Naive thymus-derived CD8-positive, alpha-beta T cell (primary cell): ENCODE measurements at regions of chr11 and their contacts with region 1.

Region 1: DNA sequence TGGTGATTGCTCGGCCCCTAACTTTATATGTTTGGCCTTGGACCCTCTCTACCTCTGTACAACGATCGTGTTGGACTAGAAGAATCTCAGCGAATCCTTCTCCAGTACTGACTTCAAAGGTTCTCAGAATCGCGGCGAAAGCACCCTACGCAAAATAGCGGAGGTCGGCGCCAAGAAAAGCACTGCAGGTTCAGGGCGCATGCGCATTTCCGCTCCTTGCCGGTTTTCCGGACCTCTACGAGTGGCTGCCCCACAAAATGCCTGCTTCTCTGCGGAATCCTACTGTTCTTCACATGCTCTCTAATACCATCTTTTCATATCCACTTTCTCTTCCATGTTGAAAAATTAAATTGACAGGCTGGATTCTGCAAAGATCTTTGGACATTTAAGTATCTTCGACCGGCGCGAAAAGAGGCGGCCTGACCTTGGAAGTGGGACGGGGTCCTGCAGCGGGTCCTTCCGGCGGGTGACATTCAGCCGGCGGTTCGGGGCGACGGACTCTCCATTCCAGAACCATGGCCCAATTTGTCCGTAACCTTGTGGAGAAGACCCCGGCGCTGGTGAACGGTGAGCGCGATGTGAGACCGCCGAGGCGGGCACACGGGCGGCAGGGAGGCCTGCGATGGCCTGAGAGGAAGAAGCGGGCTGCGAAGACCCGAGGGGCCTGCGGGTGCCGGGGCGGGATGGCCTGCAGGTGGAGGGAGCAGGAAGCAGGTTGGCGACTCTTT is at the start of gene ATP5MG:
- DNase-seq: peak; percentile 87 to 98 (median 93)
- ATAC-seq: peak; percentile 56 to 59
- H3K4me3 Mint-ChIP-seq: peak within 1 kb of the TSS; percentile 89 to 99 (median 96)
- H3K27ac Mint-ChIP-seq: peak within 1 kb of the TSS; percentile 99 to 100 (median 100)
- H3K4me1 Mint-ChIP-seq: peaks cover 31 to 74% (median 62%) of the 10 kb centered on the region in 4 donors
- H3K27me3 Mint-ChIP-seq: no peaks in the 10 kb centered on the region
- polyA plus RNA-seq, gene ATP5MG: 649 to 923 (median 790) TPM

Region 2: DNA sequence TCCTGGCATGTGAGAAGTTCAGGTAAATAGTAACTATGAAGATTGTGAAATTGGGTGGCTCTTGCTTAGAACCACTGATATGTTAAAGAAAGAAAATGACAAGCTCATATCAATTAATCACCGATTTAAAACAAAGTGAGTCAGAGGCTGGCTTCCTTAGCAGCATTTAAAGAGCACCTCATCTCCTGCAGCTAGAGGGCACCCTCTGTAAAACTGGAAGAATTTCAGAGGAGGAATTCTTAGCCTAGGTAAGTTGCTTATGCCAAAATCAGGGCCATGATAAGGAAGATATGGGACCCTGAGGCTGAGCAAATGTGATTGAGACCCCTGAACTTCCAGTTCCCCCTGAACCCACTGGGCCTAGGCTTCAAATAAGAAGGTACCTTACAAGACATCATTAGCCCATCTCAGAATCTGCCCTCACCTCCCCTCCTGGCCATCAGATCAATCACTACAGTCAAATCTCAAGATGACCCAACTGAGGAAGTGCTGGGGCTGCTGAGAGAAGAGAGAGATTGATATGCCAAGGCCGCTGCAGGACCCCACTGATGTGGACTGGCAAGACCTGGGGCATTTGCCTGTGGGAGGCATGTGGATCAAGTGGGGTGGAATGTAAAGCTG is 105.4 kb before region 1 on chr11:
- POLR2A ChIA-PET with region 1: interaction called, 11 read pairs
- DNase-seq: peak in 9 of 10 donors; percentile 25 to 76 (median 37)
- ATAC-seq: peak; percentile 80 to 82
- H3K4me3 Mint-ChIP-seq: peak overlapping the region in 3 of 10 donors; percentile 9 to 30 (median 22)
- H3K27ac Mint-ChIP-seq: peak overlapping the region; percentile 63 to 92 (median 84)
- H3K4me1 Mint-ChIP-seq: peaks cover 17 to 41% (median 27%) of the 10 kb centered on the region in 4 donors
- H3K27me3 Mint-ChIP-seq: peaks cover 0 to 1% (median 0%) of the 10 kb centered on the region in 5 donors

Region 3: DNA sequence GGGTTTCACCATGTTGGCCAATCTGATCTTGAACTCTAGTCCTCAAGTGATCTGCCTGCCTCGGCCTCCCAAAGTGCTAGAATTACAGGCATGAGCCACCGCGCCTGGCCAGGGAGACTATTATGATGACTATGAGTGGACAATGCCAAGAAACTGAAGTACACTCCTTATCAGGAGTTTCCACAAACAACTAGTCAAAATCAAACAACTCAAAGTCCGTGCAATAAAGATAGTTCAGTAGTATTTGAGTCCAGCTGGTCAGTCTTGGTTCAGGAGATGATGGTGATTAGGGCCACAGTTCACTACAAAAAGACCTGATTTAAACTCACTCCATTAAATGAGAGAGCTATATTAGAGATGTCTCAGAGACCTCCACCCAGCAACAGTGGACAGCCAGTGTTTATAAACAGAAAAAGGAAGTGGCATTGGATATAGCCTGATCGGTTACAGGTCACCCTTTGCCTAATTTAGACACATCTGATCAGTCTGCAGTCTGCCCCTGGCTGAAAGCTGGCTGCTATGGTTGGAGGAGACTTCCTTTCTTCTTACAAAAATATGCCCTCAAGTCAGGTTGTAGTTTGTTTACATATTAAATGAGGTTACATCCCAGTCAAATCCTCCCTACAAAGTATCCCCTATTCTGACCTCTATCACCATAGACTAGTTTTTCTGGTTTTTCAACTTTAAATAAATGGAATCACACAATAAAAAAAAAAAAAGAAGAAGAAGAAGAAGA is 79.8 kb before region 1 on chr11:
- POLR2A ChIA-PET with region 1: interaction called, 10 read pairs
- DNase-seq: no peak
- ATAC-seq: no peak
- H3K4me3 Mint-ChIP-seq: peak overlapping the region in 9 of 10 donors; percentile 14 to 78 (median 62)
- H3K27ac Mint-ChIP-seq: peak overlapping the region; percentile 54 to 99 (median 86)
- H3K4me1 Mint-ChIP-seq: peaks cover 38 to 83% (median 70%) of the 10 kb centered on the region in 4 donors
- H3K27me3 Mint-ChIP-seq: no peaks in the 10 kb centered on the region

Region 4: DNA sequence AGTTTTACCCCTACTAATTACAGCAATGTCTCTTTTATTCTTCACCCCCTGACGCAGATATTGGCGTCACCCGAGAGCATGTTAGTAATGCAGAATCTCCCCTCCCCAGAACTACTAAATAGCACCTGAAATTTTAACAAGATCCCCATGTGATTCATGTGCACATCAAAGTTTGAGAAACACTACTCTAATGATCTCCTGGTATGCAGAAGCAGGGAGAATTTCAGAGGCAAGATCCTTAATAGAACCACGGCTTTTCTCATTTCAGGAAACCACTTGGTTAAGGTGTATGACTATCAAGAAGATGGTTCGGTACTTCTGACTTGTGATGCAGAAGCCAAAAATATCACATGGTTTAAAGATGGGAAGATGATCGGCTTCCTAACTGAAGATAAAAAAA is 51.8 kb before region 1 on chr11:
- POLR2A ChIA-PET with region 1: no interaction called
- DNase-seq: no peak
- ATAC-seq: peak in 1 of 2 donors; percentile 22
- H3K4me3 Mint-ChIP-seq: peak overlapping the region in 8 of 10 donors; percentile 16 to 96 (median 80)
- H3K27ac Mint-ChIP-seq: peak overlapping the region; percentile 82 to 100 (median 98)
- H3K4me1 Mint-ChIP-seq: peaks cover 44 to 66% (median 58%) of the 10 kb centered on the region in 4 donors
- H3K27me3 Mint-ChIP-seq: no peaks in the 10 kb centered on the region

Region 5: DNA sequence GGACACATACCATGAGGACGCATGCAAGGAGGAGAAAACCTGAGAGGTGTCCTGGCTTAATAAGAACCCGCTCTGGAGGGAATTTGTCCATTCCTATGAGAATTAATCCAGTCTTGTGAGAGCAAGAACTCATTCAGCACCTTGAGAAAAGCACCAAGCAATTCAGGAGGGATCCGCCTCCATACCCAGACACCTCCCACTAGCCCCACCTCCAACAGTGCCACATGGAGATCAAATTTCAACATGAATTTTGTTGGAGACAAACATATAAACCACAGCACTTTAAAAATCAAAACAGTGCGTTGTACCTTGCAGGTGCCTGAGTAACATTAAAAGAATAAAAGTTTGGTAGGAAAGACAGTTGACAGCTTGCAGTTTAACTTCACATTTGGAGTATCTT is 30.5 kb before region 1 on chr11:
- POLR2A ChIA-PET with region 1: no interaction called
- DNase-seq: no peak
- ATAC-seq: no peak
- H3K4me3 Mint-ChIP-seq: no peak overlapping the region
- H3K27ac Mint-ChIP-seq: peak overlapping the region in 2 of 10 donors; percentile 32 to 62
- H3K4me1 Mint-ChIP-seq: peaks cover 0 to 9% (median 2%) of the 10 kb centered on the region in 4 donors
- H3K27me3 Mint-ChIP-seq: no peaks in the 10 kb centered on the region

Region 6: DNA sequence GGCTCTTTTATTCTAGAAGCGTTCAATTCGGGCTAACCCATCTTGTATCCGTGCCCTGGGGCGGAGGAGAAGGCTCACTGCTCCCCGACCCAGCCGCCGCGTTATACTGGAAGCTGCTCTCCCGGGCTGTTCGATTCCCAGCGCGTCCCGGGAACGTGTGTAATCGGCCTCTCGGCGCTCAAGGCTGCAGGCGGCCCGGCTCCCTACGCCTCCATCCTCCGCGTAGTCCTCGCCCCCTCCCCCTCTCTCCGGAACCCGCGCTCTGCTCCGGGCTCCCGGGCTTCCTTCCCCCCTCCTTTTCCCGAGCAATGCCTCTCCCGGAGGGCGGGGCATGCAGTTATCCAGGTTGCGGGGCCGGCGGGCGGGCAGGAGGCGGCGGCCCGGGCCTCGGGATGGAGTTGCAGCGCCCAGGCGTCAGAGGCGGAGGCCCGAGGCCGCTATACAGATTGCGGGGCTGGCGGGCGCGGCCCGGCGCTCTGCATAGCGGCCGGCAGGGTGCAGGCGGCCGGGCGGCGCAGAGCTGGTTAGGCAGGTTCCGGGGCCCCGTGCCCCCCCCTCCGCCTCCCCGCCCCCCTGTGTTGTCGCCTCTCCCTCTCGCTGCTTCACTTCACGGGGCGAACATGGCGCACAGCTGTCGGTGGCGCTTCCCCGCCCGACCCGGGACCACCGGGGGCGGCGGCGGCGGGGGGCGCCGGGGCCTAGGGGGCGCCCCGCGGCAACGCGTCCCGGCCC is 34.7 kb after region 1 on chr11 and contains the start of gene KMT2A:
- POLR2A ChIA-PET with region 1: interaction called, 43 read pairs
- DNase-seq: peak; percentile 86 to 99 (median 96)
- ATAC-seq: peak; percentile 44 to 64
- H3K4me3 Mint-ChIP-seq: peak within 1 kb of the TSS; percentile 91 to 99 (median 95)
- H3K27ac Mint-ChIP-seq: peak within 1 kb of the TSS; percentile 89 to 99 (median 98)
- H3K4me1 Mint-ChIP-seq: peaks cover 28 to 54% (median 36%) of the 10 kb centered on the region in 4 donors
- H3K27me3 Mint-ChIP-seq: no peaks in the 10 kb centered on the region
- polyA plus RNA-seq, gene KMT2A: 16.9 to 30.5 (median 19.5) TPM

Region 7: DNA sequence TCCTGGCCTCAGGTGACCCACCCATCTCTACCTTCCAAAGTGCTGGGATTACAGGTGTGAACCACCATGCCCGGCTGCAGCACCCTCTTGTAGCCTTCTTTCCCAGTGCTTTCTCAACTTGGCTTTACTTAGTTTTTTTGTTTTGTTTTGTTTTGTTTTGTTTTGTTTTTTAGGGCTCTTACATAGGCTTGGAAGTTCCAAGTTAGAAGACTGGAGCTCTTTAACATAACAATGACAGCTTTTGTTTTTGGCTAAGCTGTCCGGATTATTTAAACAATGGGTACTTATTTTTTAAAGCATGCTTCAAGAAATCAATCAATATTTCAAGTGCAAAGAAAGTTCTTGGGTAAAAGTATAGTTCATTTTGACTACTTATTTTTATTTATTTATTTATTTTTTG is 60.9 kb after region 1 on chr11:
- POLR2A ChIA-PET with region 1: no interaction called
- DNase-seq: no peak
- ATAC-seq: no peak
- H3K4me3 Mint-ChIP-seq: no peak overlapping the region
- H3K27ac Mint-ChIP-seq: peak overlapping the region in 2 of 10 donors; percentile 33 to 51
- H3K4me1 Mint-ChIP-seq: peaks cover 18 to 57% (median 42%) of the 10 kb centered on the region in 4 donors
- H3K27me3 Mint-ChIP-seq: no peaks in the 10 kb centered on the region